AG04449 (cell line): ENCODE measurements at regions of chr17 and their contacts with region 1.

Region 1: DNA sequence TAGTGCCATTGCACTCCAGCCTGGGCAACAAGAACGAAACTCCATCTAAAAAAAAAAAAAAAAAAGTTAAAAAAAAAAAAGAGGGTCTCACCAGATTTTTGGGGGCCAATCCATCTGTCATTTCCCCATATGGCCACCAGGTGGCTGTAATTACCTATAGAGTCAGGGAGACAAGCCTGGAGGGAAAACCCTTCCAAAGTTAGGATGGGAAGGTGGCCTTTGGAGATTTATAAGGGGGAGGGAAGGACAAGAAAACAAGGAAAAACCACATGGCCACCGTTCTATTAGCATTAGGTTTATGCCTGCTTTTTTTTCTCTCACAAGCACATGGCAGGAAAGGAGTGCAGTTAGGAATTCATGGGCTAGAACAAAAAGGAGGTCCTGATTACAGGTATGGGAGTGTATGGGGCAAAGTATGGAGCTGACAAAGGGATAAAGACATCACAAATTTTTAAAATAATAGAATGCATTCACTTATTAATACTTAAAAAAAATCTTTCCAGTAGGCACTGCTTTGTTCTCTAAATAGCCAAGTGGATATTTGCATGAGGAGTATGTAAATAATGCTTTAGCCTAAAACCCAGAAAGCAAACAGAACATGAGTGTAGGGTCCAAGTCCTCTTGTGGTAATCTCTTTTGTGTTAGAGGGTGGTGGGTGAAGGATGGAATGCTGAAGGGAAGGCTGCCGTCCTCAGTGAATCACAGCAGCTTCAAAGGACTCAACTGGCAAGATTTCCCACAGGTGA is 5.1 kb downstream of the CYB5D1 start:
- DNase-seq: no peak
- H3K4me3 ChIP-seq: no peak overlapping the region
- CTCF ChIP-seq: peak; percentile 59

Region 2: GRCh38 chr17:7763919-7764318 is 98.9 kb before region 1 on chr17:
- CTCF ChIA-PET with region 1: no interaction called
- POLR2A ChIA-PET with region 1: no interaction called
- DNase-seq: no peak
- H3K4me3 ChIP-seq: no peak overlapping the region
- CTCF ChIP-seq: no peak

Region 3: GRCh38 chr17:7798839-7799238 is 64.0 kb before region 1 on chr17:
- CTCF ChIA-PET with region 1: no interaction called
- POLR2A ChIA-PET with region 1: no interaction called
- DNase-seq: no peak
- H3K4me3 ChIP-seq: no peak overlapping the region
- CTCF ChIP-seq: no peak

Region 4: DNA sequence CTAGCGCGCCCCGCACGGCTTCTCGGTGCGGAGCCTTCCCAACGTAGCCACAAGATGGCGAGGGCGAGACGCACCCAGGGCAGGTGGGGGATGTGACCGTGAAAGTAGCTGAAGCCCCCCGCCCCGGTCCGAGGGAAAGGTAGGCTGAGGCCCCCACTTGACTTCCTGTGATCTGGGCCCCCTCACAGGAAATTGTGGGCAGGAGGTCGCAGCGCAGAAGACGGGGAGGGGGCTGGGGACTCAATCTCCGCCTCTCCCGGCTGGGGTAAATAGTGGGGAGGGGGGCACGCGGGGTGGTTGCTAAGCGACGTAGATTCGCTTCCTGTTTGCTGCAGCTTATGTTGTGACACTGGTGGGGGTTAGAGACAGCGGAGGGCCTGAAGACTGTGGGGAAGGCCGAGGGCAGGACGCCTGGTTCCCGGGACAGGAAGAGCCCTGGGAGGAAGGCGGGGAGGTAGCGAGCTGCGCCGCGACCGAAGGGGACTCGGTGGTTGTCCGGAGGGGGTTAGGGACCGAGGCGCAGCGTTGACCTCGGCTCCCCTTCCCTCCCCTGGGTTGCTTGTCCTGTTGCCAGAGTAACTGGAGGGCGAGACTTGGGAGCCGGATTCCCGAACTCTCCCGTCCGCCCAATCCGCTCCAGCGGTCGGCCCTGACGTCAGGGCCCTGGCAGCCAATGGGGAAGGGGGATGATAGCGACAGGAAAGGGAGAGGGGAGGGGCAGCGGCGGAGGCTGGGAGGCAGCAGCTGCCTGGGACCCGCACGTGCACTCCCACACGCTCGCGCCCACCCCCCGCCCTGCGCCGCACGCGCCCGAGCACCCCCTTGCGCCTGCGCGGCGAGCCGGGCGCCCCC is 27.7 kb before region 1 on chr17:
- CTCF ChIA-PET with region 1: interaction called, 17 read pairs
- POLR2A ChIA-PET with region 1: interaction called, 3 read pairs
- DNase-seq: peak; percentile 91
- H3K4me3 ChIP-seq: peak overlapping the region; percentile 83
- CTCF ChIP-seq: peak; percentile 95

Region 5: GRCh38 chr17:7873051-7873450 is 10.2 kb after region 1 on chr17:
- CTCF ChIA-PET with region 1: interaction called, 44 read pairs
- POLR2A ChIA-PET with region 1: no interaction called
- DNase-seq: no peak
- H3K4me3 ChIP-seq: no peak overlapping the region
- CTCF ChIP-seq: no peak

Region 6: DNA sequence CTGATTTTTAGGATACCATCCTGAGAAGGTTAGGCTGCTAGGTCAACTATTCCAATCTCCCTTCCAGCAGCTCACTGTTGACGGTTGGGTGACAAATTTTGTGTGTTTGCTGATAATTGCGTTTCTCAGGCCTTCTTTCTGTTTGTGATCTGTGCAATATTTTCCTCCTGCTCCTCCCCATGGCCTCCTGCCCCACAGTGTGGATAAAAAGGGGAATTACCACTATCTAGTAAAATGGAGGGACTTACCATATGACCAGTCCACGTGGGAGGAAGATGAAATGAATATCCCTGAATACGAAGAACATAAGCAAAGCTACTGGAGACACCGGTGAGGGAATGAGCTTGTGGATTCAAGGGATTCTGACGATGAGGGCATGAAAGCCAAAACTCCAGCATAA is 34.9 kb after region 1 on chr17:
- CTCF ChIA-PET with region 1: interaction called, 125 read pairs
- POLR2A ChIA-PET with region 1: no interaction called
- DNase-seq: no peak
- H3K4me3 ChIP-seq: no peak overlapping the region
- CTCF ChIP-seq: peak; percentile 44

Region 7: DNA sequence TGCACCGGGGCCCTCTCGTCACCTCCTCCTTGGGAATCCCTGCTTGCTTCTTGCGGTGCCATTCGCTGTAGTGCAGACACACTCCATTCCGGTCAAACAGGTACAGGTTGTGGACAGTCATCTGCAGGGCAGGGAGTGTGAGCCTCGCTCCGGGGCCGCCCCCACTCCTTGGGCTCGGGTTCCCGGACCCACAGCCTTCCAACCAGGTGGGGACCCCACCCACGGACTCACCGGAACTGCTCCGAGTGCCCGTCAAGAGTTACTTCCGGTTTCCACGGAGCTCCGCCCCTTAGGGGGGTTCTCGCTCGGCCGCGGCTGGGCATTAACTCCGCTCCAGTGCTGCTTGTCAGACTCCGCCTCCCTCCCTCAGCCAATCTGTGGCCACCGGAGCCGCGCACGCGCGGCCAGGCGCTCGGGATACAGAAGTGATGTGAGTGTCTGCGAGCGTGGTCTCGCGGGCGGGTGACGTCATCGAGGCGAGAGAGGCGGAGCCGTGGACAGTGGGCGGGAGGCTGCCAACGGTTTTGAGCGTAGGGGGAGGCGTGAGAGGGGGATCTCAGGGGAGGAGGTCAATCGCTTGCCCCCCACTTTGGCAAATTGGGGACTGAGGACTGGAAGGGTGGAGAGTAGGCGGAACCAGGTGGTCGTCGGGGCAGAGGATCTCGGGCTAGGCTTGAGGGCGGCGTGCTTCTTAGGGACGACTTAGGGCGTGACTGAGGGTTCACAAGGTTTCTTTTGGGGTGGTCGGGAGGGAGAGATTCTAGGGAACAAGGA is 69.0 kb after region 1 on chr17 and contains the starts of genes CNTROB and TRAPPC1:
- CTCF ChIA-PET with region 1: interaction called, 21 read pairs
- POLR2A ChIA-PET with region 1: no interaction called
- DNase-seq: peak; percentile 92
- H3K4me3 ChIP-seq: peak within 1 kb of the TSS; percentile 100
- CTCF ChIP-seq: no peak